PC-9 (cell line): ENCODE measurements at regions of chr1 and their contacts with region 1.

Region 1: GRCh38 chr1:150650199-150650598 is 20.8 kb upstream of the ENSA start:
- DNase-seq: peak; percentile 67 to 94
- H3K4me3 ChIP-seq: no peak overlapping the region
- H3K27ac ChIP-seq: peak overlapping the region; percentile 65; the same call in 1 of the 2 replicates
- H3K4me1 ChIP-seq: peaks cover 20% of the 10 kb centered on the region
- H3K27me3 ChIP-seq: no peaks in the 10 kb centered on the region
- CTCF ChIP-seq: no peak

Region 2: DNA sequence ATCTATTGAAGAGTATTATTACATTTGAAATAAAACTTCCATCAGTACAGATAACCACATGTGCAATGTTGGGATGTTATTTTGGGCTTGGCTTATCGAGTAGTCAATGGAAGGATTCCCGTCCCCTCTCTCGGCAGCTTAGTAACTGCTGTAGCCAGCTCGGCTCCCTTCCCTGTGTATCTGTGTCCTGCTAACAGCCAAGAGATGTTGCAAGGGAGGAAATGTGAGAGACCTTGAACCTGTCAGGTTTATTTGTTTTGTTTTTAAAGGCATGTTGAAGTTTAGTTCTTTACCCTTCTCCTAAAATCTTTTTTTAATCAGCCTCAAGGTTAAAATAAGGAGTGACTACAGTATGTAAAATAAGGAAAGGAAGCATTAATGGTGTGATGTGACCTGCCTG is 176.5 kb before region 1 on chr1:
- CTCF ChIA-PET with region 1: no interaction called
- POLR2A ChIA-PET with region 1: no interaction called
- intact Hi-C with region 1: no loop called
- DNase-seq: no peak
- H3K4me3 ChIP-seq: no peak overlapping the region
- H3K27ac ChIP-seq: no peak overlapping the region
- H3K4me1 ChIP-seq: peaks cover 3% of the 10 kb centered on the region; the same call in 1 of the 2 replicates
- H3K27me3 ChIP-seq: no peaks in the 10 kb centered on the region
- CTCF ChIP-seq: no peak

Region 3: GRCh38 chr1:150621497-150622302 is 28.5 kb before region 1 on chr1:
- CTCF ChIA-PET with region 1: no interaction called
- POLR2A ChIA-PET with region 1: no interaction called
- intact Hi-C with region 1: no loop called
- DNase-seq: no peak
- H3K4me3 ChIP-seq: no peak overlapping the region
- H3K27ac ChIP-seq: peak overlapping the region; percentile 9; the same call in 1 of the 2 replicates
- H3K4me1 ChIP-seq: peaks cover 57% of the 10 kb centered on the region
- H3K27me3 ChIP-seq: no peaks in the 10 kb centered on the region
- CTCF ChIP-seq: peak; percentile 73

Region 4: GRCh38 chr1:150836129-150836773 is 186.1 kb after region 1 on chr1:
- CTCF ChIA-PET with region 1: no interaction called
- POLR2A ChIA-PET with region 1: interaction called, 20 read pairs
- intact Hi-C with region 1: no loop called
- DNase-seq: no peak
- H3K4me3 ChIP-seq: no peak overlapping the region
- H3K27ac ChIP-seq: no peak overlapping the region
- H3K4me1 ChIP-seq: no peaks in the 10 kb centered on the region
- H3K27me3 ChIP-seq: no peaks in the 10 kb centered on the region
- CTCF ChIP-seq: no peak